ENCODE measurements at regions of chr12 and their contacts with region 1.

Region 1: DNA sequence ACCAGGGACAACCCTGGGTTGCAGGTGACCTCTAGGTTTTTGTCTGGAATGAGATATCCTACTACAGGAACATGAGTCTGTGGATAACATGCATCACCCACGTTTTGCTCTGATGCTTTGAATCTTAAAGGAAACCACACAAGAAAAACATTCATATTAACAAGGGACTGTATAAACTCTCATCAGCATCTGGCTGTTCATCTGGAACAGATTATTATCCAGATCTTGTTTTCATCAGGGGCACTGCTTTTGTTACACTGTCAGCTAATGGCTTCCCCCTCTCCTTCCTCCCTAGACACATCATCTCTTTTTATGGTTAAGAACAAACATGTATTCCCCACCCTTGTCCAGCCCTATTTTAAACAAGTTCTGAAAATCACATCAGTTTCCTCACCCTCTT is 1095.7 kb downstream of the AACS start:
- DNase-seq: no peak
- ATAC-seq: no peak

Region 2: DNA sequence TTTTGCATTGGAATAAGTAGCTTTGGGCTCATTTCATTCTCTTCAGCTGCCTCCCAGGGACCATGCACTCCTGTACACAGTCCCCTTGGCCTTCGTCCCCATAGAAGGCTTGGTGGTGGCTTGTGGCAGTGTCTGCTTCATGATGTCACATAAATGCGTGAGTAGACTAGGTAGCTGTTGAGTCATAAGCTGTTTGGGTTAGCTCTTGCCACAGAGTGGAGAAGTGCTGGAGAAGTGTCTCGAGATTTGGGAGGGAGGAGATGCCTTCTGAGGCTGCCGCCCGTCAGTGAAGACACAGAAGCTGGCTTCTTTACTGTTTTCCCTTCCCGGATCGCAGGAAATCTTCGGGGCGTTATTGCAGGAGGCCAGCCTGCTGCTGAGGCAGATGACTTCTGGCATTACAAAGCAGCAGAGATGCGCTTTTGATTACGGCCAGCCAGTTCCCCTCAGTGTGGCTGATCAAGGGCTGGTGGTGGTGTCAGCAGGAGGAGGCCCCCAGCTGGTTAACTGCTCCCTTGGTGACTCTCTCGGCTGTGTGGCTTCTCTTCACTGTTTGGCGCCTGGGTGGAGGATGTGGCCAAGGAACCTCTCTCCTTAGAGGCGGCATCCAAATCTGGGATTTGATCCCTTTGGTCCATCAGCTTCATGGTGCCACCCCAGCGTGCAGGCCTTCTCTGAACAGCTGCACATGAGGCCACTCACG is 1028.1 kb before region 1 on chr12:
- intact Hi-C with region 1: no loop called
- DNase-seq: no peak
- ATAC-seq: no peak

Region 3: GRCh38 chr12:125159683-125160082 is 1001.2 kb before region 1 on chr12:
- intact Hi-C with region 1: loop called (anchors 10 kb)
- DNase-seq: no peak
- ATAC-seq: no peak

Region 4: DNA sequence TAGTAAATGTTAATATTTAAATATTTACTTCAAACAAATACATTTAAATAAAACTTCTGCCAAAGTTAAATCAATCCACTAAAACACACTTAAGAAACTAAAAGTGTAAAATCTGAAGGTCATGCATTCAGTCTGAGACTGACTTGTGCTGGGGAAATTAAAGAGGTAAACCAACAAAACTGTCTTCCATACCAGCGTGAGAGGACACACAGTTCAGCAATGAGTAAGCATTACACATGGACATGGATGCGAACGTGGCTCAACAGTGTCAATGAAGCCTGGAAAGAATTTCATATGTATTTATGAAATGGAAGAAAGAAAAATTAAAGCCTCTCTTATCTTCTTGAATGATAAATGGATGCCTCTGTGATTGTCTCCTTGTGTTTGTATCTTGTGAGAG is 43.4 kb before region 1 on chr12:
- intact Hi-C with region 1: no loop called
- DNase-seq: no peak
- ATAC-seq: no peak

Region 5: GRCh38 chr12:127628645-127629044 is 1467.7 kb after region 1 on chr12:
- intact Hi-C with region 1: no loop called
- DNase-seq: no peak
- ATAC-seq: no peak